Gastrocnemius medialis (tissue), 4 donors: ENCODE measurements at regions of chr2 and their contacts with region 1.

Region 1: DNA sequence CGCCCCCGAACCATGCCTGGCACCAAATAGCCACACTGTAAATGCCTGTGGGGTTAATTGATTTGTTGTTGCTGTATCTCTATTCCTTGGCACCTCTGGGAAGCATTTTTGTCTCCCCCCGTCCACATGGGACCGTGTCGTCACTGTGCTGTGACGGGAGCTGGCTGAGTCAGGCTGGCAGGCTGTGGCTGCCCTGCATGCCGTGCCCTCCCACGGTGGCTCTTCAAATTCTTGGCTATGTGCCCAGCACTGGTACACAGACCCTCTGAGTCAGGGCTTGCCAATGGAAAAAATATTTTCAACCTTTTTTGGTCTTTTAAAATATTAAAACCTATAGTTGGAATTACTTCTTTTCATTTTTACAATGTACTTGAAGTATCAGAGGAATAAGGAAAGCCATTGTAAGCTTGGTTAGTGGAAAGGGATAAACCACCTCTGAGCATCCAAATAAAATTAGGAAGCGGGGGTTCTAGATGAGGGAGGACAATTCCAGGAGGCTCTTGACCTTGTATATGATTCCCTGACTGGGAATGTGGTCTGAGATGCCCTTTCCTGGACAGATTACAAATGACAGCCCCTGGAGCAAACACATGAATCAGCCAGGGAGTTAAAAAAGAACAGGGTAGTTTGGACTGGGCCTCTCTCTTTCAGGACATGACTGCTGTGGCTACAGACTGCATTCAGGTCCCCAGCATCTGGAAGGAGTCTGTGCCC is 59.4 kb downstream of the DGKD start:
- DNase-seq: peak in 1 of 2 donors; percentile 70
- ATAC-seq: peak; percentile 15 to 17
- H3K4me3 ChIP-seq: no peak overlapping the region
- H3K27ac ChIP-seq: peak overlapping the region; percentile 92 to 97 (median 96)
- H3K4me1 ChIP-seq: peaks cover 51 to 58% of the 10 kb centered on the region in 2 donors
- H3K27me3 ChIP-seq: no peaks in the 10 kb centered on the region
- CTCF ChIP-seq: no peak
- POLR2A ChIP-seq: no peak

Region 2: GRCh38 chr2:233363744-233364235 is 49.9 kb before region 1 on chr2:
- in situ Hi-C with region 1: no loop called
- intact Hi-C with region 1: no loop called
- DNase-seq: no peak
- ATAC-seq: no peak
- H3K4me3 ChIP-seq: no peak overlapping the region
- H3K27ac ChIP-seq: no peak overlapping the region
- H3K4me1 ChIP-seq: peaks cover 0 to 9% of the 10 kb centered on the region in 2 donors
- H3K27me3 ChIP-seq: no peaks in the 10 kb centered on the region
- CTCF ChIP-seq: no peak
- POLR2A ChIP-seq: no peak

Region 3: GRCh38 chr2:233436191-233436581 is 22.5 kb after region 1 on chr2:
- in situ Hi-C with region 1: no loop called
- intact Hi-C with region 1: loop called (anchors 2 kb)
- DNase-seq: peak; percentile 59 to 92
- ATAC-seq: peak; percentile 64 to 82
- H3K4me3 ChIP-seq: no peak overlapping the region
- H3K27ac ChIP-seq: peak overlapping the region; percentile 92 to 97 (median 96)
- H3K4me1 ChIP-seq: peaks cover 68 to 87% of the 10 kb centered on the region in 2 donors
- H3K27me3 ChIP-seq: no peaks in the 10 kb centered on the region
- CTCF ChIP-seq: no peak
- POLR2A ChIP-seq: no peak

Region 4: GRCh38 chr2:233449081-233449901 is 35.6 kb after region 1 on chr2:
- in situ Hi-C with region 1: loop called in 1 of 4 experiments (anchors 5 kb)
- intact Hi-C with region 1: no loop called
- DNase-seq: peak in 1 of 2 donors; percentile 24
- ATAC-seq: peak in 1 of 2 donors; percentile 18
- H3K4me3 ChIP-seq: no peak overlapping the region
- H3K27ac ChIP-seq: peak overlapping the region in 1 of 4 donors; percentile 52
- H3K4me1 ChIP-seq: no peaks in the 10 kb centered on the region
- H3K27me3 ChIP-seq: no peaks in the 10 kb centered on the region
- CTCF ChIP-seq: peak in 2 of 5 experiments; percentile 8 to 35
- POLR2A ChIP-seq: no peak

Region 5: DNA sequence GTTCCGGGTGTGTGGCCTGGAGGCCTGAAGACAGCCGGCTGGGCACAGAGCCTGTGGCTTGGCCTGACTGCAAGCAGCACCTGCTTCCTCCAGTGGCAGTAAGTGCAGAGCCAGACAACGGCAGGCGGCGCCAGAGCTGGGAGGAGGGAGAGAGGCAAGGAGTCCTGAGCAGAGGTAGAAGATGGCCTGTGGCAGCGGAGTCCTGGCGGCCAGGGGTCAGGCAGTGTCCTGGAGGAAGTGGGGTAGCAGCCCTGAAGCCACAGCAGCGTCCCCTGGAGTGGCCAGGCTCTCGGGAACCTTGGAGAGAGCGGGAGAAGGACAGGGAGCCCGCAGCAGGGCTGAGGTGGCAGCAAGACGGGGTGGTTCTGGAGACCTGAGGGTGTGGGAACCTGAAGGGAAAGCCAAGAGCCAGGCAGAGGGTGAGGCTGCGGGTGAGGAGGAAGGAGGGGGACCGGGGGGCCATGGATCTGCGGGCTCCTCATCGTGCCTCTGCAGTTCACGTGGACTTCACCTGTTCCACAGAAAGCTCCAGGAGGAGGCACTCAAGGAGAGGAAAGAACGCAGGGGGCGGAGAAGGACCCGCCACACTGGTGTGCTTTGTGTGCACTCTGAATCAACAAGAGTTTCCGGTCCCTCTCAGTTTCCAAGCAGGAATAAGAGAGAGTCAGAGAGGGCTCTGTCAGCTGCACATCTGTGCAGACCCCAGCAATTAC is 66.9 kb after region 1 on chr2:
- in situ Hi-C with region 1: no loop called
- intact Hi-C with region 1: loop called (anchors 5 kb)
- DNase-seq: peak; percentile 81 to 94
- ATAC-seq: peak; percentile 55 to 75
- H3K4me3 ChIP-seq: no peak overlapping the region
- H3K27ac ChIP-seq: peak overlapping the region; percentile 55 to 83 (median 76)
- H3K4me1 ChIP-seq: peaks cover 12 to 23% of the 10 kb centered on the region in 2 donors
- H3K27me3 ChIP-seq: no peaks in the 10 kb centered on the region
- CTCF ChIP-seq: peak in 1 of 5 experiments; percentile 31
- POLR2A ChIP-seq: no peak